Activated T-helper 1 cell treated with anti-CD3 and anti-CD28 coated beads, Interleukin-12 subunit alpha, Interleukin-12 subunit beta, Interleukin-2, Interleukin-4 antibody, amounts not matched to agents 30 ng/mL and 10 ng/mL and 1 ng/mL, durations not matched to agents 14 hours and 24 hours and 36 hours (primary cell): ENCODE measurements at regions of chr22 and their contacts with region 1.

Region 1: DNA sequence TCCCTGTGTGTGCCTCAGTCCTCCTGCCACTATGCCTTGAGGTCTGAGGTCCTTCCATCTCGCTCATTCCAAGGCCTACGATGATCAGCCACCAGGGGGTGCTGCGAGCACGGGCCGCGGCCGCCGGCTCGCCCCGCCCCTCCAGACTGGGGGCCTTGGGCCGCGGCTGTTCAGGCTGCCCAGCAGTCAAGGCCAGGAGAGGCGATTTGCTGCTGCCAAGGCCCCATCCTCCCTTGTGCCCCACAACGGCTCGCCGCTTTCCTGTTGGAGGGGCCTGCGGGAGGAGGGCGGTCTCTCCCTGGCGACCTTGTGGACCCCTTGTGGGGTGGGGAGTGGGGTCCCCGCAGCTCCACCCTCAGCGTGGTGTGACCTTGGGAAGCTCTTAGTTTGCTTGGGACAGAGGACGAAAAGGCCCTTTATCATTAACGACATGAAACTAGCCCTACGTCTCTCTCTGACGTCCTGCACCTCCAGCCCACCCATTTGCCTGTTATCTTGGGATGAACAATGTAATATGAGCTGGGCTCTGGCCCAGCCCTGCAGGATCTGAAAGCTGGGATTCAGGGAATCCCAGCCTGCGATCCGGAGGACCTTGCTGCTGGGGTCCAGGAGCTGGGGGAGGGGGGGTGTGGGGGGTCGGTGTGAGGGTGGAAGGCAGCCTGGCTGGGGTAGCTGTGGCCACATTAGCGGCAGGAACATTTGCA is 5.3 kb upstream of the GALR3 start:
- DNase-seq: peak; percentile 74
- H3K4me3 Mint-ChIP-seq: peak overlapping the region; percentile 45
- H3K27ac Mint-ChIP-seq: no peak overlapping the region
- H3K4me1 Mint-ChIP-seq: peaks cover 12% of the 10 kb centered on the region
- H3K27me3 Mint-ChIP-seq: peaks cover 29% of the 10 kb centered on the region

Region 2: GRCh38 chr22:37807410-37808293 is 10.2 kb before region 1 on chr22 and contains the start of gene GCAT:
- intact Hi-C with region 1: loop called (anchors 1 kb)
- DNase-seq: peak; percentile 90
- H3K4me3 Mint-ChIP-seq: peak within 1 kb of the TSS; percentile 82
- H3K27ac Mint-ChIP-seq: peak within 1 kb of the TSS; percentile 58
- H3K4me1 Mint-ChIP-seq: peaks cover 44% of the 10 kb centered on the region
- H3K27me3 Mint-ChIP-seq: peaks cover 13% of the 10 kb centered on the region
- total RNA-seq, gene GCAT: 28.5 and 28.9 TPM in 2 replicates

Region 3: DNA sequence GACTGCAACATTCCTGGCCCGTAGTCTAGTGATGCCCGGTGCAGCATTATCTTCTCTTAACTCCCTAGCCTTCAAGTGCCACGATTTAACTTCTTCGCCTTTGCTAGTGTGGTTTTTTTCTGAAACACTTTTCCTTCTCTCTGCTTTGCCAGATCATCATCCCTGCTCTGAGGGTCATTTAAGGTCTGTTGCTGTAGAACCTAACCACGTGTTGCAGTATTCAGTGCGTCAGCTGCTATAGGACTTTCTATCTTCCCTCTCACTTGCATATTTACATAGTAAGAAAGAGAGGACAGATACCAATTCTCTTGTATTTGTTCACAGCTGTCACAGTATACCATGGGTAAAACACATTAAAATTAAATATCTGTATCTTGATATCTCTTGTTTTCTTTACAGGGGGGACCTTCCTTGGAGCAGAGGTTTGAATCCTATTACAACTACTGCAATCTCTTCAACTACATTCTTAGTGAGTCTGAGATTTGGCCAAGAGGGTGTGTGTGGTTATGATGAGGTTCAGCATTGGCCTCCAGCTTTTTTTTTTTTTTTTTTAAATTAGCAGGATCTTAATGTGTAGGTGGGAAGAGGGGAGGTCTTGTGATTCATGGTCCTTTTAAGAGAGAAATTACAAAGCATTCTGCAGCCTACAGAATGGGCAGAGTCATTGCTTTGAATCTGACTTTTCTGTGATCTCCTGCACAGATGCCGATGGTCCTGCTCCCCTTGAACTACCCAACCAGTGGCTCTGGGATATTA is 44.9 kb after region 1 on chr22:
- intact Hi-C with region 1: loop called (anchors 1 kb)
- DNase-seq: no peak
- H3K4me3 Mint-ChIP-seq: no peak overlapping the region
- H3K27ac Mint-ChIP-seq: no peak overlapping the region
- H3K4me1 Mint-ChIP-seq: peaks cover 7% of the 10 kb centered on the region
- H3K27me3 Mint-ChIP-seq: no peaks in the 10 kb centered on the region

Region 4: GRCh38 chr22:37933711-37934376 is 116.0 kb after region 1 on chr22:
- intact Hi-C with region 1: loop called (anchors 1 kb)
- DNase-seq: peak; percentile 78
- H3K4me3 Mint-ChIP-seq: no peak overlapping the region
- H3K27ac Mint-ChIP-seq: peak overlapping the region; percentile 34
- H3K4me1 Mint-ChIP-seq: peaks cover 11% of the 10 kb centered on the region
- H3K27me3 Mint-ChIP-seq: no peaks in the 10 kb centered on the region

Region 5: DNA sequence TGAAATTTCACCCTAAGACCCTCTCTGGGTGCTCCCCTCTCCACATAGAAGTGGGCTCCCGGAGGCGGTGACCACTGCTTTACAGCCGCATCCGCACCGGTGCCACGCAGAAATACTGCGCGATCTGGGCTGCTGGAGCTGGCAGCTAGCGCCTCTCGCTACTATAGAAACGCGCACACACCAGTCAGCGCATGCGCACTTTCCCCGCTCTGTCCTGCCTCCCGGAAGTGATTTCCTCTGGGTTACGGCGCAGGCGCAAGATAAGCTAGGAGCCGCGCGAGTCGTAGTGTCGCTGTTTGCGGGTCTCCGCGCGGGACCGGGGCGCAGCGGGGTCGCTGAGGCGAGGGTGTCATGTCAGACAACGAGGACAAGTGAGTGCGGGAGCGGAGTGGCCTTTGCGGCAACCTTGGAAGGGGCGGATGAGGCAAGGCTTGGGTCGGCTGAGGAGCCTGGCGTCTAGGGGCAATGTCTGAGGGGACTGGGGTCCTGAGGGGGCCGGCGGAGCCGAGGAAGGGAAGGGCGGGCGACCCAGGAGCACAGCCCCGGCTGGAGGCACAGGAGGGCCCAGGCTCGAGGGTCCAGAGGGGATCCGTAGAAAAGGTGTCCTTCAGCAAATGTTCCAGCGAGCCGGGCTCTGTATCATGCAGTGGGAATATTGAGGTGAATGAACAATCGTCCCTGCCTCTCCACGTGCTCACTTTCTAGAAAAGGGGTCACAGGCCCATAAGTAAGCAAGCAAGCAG is 135.8 kb after region 1 on chr22 and contains the starts of genes C22orf23 and POLR2F:
- intact Hi-C with region 1: loop called (anchors 1 kb)
- DNase-seq: peak; percentile 94
- H3K4me3 Mint-ChIP-seq: peak within 1 kb of the TSS; percentile 99
- H3K27ac Mint-ChIP-seq: peak within 1 kb of the TSS; percentile 92
- H3K4me1 Mint-ChIP-seq: peaks cover 26% of the 10 kb centered on the region
- H3K27me3 Mint-ChIP-seq: peaks cover 7% of the 10 kb centered on the region
- total RNA-seq, gene C22orf23: 0.61 TPM in 1 of 2 replicates, not detected in the other
- total RNA-seq, gene POLR2F: 102 and 120 TPM in 2 replicates

Region 6: DNA sequence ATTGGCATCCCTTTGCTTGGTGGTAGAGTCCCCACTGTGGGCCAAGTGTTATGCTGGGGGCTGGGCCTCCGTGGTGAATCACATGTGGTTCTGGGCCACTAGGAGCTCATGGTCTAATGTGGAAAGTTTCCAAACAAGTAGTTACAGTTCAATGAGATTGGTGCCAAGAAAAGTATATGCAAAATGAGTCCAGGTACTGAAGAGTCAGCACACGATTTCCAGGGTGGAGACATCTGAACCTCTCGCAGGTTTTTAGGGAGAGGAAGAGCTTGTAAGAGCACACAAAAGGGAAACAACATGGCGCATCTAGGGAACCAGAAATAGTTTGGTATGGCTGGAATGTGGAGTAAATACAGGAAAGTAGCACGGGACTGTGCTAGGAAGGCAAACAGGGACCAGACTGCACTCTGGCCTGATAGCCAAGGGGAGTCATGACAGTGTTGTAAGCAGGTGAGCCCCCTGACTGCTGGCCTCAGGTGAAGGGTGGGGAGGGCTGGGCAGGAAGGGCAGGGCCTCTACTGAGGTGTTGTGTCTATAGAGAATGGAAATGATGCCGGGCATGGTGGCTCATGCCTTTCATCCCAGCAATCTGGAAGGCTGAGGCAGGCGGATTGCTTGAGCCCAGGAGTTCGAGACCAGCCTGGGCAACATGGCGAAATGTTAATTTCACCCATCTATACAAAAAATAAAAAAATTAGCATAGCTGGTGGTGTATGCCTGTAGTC is 148.2 kb after region 1 on chr22:
- intact Hi-C with region 1: loop called (anchors 1 kb)
- DNase-seq: no peak
- H3K4me3 Mint-ChIP-seq: no peak overlapping the region
- H3K27ac Mint-ChIP-seq: peak overlapping the region; percentile 44
- H3K4me1 Mint-ChIP-seq: peaks cover 6% of the 10 kb centered on the region
- H3K27me3 Mint-ChIP-seq: no peaks in the 10 kb centered on the region

Region 7: DNA sequence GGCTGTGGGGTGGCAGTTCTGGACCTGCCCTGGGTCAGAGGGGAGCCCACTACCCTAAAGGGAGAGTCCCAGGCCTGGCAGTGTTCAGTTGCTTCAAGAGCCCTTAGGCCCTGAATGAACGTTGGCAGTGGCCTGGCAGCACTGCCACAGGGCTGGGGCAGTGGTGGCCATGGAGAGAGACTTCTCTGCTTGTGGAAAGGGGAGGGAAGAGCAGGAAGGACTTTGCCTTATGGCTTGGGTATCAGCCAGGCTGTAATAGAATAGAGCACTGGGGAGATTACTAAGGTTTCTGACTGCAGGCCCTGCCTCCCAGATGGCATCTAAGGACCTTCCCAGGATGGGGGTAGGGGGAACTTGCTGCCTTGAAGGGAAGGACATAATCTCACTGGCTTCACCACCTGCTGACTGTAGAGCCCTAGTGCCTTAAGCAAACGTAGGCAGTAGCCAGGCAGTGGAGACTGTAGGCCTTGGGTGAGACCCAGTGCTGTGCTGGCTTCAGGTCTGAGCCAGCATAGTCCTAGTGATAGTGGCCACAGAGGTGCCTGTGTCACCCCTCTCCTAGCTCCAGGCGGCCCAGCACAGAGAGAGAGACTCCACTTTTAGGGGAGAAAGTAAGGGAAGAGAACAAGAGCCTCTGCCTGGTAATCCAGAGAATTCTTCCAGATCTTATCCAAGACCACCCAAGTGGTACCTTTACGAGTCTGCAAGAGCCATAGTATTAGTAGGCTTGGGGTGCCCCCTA is 336.1 kb after region 1 on chr22:
- intact Hi-C with region 1: no loop called
- DNase-seq: no peak
- H3K4me3 Mint-ChIP-seq: no peak overlapping the region
- H3K27ac Mint-ChIP-seq: no peak overlapping the region
- H3K4me1 Mint-ChIP-seq: no peaks in the 10 kb centered on the region
- H3K27me3 Mint-ChIP-seq: no peaks in the 10 kb centered on the region